ENCODE measurements at regions of chr14 and their contacts with region 1.

Region 1: GRCh38 chr14:22570132-22570949 is 18.7 kb downstream of the DAD1 start:
- DNase-seq: no peak
- H3K4me3 ChIP-seq: no peak overlapping the region
- CTCF ChIP-seq: peak; percentile 37

Region 2: GRCh38 chr14:22598099-22598899 is 28.0 kb after region 1 on chr14 and contains the start of gene ABHD4:
- CTCF ChIA-PET with region 1: interaction called, 141 read pairs
- POLR2A ChIA-PET with region 1: no interaction called
- DNase-seq: no peak
- H3K4me3 ChIP-seq: peak within 1 kb of the TSS; percentile 92
- CTCF ChIP-seq: no peak

Region 3: GRCh38 chr14:22646570-22647254 is 76.4 kb after region 1 on chr14:
- CTCF ChIA-PET with region 1: interaction called, 299 read pairs
- POLR2A ChIA-PET with region 1: interaction called, 5 read pairs
- DNase-seq: no peak
- H3K4me3 ChIP-seq: no peak overlapping the region
- CTCF ChIP-seq: no peak

Region 4: GRCh38 chr14:22766456-22767322 is 196.3 kb after region 1 on chr14 and contains the start of gene OXA1L:
- CTCF ChIA-PET with region 1: interaction called, 49 read pairs
- POLR2A ChIA-PET with region 1: no interaction called
- DNase-seq: peak; percentile 86
- H3K4me3 ChIP-seq: peak within 1 kb of the TSS; percentile 99
- CTCF ChIP-seq: no peak

Region 5: DNA sequence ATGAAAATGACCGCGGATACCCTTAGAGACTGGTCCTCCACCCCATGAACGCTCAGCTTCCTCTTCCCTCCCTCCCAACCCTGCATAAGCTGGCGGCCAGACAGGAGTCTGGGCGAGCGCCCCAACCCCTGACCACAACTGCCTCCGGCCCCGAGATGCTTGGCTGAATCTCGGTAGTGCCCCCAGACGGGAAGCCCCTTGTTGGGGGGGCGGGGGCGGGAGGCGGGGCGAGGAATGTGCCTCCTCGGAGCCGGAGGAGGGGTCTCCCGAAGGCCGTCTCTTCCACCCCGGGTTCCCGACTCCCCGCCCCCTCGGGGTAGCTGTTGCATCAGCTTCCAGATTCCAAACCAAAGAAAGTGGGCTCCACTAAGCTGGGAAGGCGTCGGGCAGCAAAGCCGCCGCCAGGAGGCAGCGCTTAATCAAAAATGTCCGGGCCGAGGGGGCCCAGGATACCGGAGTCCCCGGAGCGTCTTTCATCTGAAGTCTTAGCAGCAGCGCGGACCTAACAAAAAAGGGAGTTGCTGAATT is 252.3 kb after region 1 on chr14:
- CTCF ChIA-PET with region 1: interaction called, 22 read pairs
- POLR2A ChIA-PET with region 1: no interaction called
- DNase-seq: no peak
- H3K4me3 ChIP-seq: peak overlapping the region; percentile 24
- CTCF ChIP-seq: peak; percentile 78

Region 6: DNA sequence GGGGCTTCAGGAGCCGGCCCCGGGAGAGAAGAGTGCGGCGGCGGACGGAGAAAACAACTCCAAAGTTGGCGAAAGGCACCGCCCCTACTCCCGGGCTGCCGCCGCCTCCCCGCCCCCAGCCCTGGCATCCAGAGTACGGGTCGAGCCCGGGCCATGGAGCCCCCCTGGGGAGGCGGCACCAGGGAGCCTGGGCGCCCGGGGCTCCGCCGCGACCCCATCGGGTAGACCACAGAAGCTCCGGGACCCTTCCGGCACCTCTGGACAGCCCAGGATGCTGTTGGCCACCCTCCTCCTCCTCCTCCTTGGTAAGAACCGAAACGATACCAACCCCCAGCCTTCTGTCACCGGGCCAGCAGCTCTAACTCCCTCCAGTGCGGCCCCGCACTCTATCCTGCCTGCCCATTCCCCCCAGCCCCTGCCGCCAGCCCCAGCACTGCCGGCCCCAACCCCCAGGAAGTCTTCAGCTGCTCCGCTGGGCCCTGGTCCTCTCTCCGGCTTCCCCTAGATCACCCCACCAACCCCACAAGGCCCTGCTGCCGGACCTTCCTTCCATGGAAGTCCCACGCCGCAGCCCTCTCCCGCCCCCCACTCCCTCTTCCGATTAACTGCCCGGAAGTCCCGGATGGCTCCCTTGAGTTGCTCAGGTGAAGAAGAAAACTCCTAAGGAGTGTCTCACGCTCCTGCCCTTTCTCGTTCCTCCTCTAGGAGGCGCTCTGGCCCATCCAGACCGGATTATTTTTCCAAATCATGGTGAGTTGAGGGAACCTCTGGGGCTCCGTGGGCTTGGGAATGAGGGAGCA is 301.9 kb after region 1 on chr14:
- CTCF ChIA-PET with region 1: interaction called, 12 read pairs
- POLR2A ChIA-PET with region 1: no interaction called
- DNase-seq: no peak
- H3K4me3 ChIP-seq: peak overlapping the region; percentile 81
- CTCF ChIP-seq: peak; percentile 87

Measured in AG04449 (cell line).